ENCODE measurements at regions of chr11 and their contacts with region 1.

Region 1: GRCh38 chr11:78228467-78228866 is 39.7 kb downstream of the USP35 start:
- DNase-seq: peak; percentile 32
- ATAC-seq: peak; percentile 88
- H3K4me3 ChIP-seq: no peak overlapping the region
- H3K27ac ChIP-seq: no peak overlapping the region
- H3K4me1 ChIP-seq: no peaks in the 10 kb centered on the region
- H3K27me3 ChIP-seq: no peaks in the 10 kb centered on the region
- CTCF ChIP-seq: peak; percentile 45 to 77 (median 47); a peak in 5 of 6 replicates
- POLR2A ChIP-seq: no peak
- RAD21 ChIP-seq: peak; percentile 79

Region 2: GRCh38 chr11:78268591-78269410 is 40.3 kb after region 1 on chr11:
- CTCF ChIA-PET with region 1: no interaction called
- POLR2A ChIA-PET with region 1: no interaction called
- RAD21 ChIA-PET with region 1: no interaction called
- intact Hi-C with region 1: no loop called
- DNase-seq: no peak
- ATAC-seq: no peak
- H3K4me3 ChIP-seq: no peak overlapping the region
- H3K27ac ChIP-seq: no peak overlapping the region
- H3K4me1 ChIP-seq: no peaks in the 10 kb centered on the region
- H3K27me3 ChIP-seq: no peaks in the 10 kb centered on the region
- CTCF ChIP-seq: no peak
- POLR2A ChIP-seq: no peak
- RAD21 ChIP-seq: no peak

Region 3: DNA sequence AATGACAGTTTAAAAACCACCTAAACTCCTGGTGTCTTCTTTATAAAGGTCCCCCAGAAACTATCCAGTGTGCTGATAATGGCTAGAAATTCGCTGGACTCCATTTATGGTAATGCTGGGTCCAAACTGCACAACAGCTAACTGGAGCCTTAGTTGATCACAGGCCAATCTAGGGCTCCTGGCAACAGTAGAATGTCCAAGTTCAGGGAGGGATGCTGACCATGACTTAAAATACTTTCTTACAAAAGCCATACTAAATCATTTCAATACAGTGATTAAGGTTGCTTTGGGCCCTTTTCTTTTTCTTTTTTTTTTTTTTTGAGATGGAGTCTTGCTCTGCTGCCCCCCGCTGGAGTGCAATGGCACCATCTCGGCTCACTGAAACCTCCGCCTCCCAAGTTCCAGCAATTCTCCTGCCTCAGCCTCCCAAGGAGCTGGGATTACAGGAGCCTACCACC is 203.6 kb after region 1 on chr11:
- CTCF ChIA-PET with region 1: interaction called, 6 read pairs
- POLR2A ChIA-PET with region 1: interaction called, 3 read pairs
- RAD21 ChIA-PET with region 1: no interaction called
- intact Hi-C with region 1: loop called (anchors 1 kb)
- DNase-seq: no peak
- ATAC-seq: peak; percentile 69
- H3K4me3 ChIP-seq: no peak overlapping the region
- H3K27ac ChIP-seq: no peak overlapping the region
- H3K4me1 ChIP-seq: no peaks in the 10 kb centered on the region
- H3K27me3 ChIP-seq: no peaks in the 10 kb centered on the region
- CTCF ChIP-seq: peak; percentile 24 to 69 (median 64); a peak in 4 of 6 replicates
- POLR2A ChIP-seq: no peak
- RAD21 ChIP-seq: peak; percentile 49

Measured in HCT116 (cell line).